ENCODE measurements at regions of chr3 and their contacts with region 1.

Region 1: DNA sequence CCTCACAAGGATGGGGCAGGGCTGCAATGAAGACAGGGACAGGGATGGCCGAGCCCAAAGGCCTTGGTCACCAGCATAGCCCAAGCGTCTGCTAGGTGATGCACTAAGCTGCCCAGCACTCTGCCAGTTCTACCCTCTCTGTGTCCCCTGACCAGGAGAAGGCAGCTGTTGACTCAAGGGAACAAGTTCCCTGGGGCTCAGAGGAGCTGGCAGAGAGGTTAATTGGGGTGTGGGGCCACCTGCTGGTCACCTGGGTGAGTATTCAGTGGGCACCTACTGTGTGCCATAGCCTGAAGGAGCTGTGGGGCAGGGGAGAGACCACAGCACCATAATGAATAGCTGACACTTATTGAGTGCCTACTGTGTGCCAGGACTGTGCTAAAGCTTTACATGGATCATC is 22.0 kb upstream of the DOCK3 start:
- DNase-seq: peak; percentile 32 to 51 (median 42)
- ATAC-seq: peak; percentile 78
- H3K4me3 ChIP-seq: no peak overlapping the region
- H3K27ac ChIP-seq: no peak overlapping the region
- H3K4me1 ChIP-seq: peaks cover 0 to 4% of the 10 kb centered on the region in 2 experiments; a peak in 2 of 5 replicates
- H3K27me3 ChIP-seq: peaks cover 0 to 4% of the 10 kb centered on the region in 2 experiments; a peak in 1 of 5 replicates
- CTCF ChIP-seq: peak; percentile 44 to 60 (median 52)
- EP300 ChIP-seq: no peak
- POLR2A ChIP-seq: no peak
- RAD21 ChIP-seq: peak; percentile 30 to 65

Region 2: DNA sequence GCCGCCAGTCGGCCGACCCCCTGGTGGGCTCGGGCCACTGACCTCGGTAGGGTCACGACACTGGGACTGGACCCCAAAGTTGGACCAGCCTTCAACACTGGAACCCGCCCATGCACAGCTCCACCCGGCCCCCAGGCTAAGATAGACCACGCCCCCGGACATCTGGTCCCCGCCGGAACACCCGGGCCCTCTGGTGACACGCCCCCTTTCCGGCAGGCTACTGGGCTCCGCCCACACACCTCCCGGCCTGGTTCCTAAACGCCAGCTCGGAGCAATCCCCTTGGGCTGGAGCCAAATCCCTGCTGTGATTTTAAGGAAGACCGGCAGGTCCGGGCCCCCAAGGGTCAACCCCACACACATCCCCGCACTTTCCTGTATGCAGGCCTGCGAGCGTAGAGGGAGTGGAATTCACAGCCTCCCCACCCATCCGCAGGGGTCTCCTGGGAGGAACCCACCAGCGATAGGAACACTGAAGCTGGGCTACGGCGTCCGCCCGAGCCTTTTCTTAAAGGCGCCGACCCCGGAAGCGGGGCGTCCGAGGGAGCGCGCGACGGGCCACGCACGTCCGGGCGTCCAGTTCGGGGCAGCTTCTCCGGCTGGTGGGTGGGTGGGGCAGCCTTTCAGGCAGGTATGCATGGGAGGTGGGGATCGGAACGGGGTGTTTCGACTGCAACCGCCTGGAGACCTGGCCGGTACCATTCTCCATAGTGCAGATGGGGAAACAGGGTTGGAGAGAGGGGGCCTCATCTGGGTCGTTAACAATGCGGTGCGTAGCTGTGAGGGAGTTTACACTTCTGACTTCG is 83.6 kb before region 1 on chr3 and contains the start of gene HEMK1:
- CTCF ChIA-PET with region 1: no interaction called
- POLR2A ChIA-PET with region 1: interaction called, 3 read pairs
- in situ Hi-C with region 1: loop called (anchors 5 kb)
- intact Hi-C with region 1: loop called (anchors 1 kb)
- DNase-seq: peak; percentile 95 to 98 (median 97)
- ATAC-seq: peak; percentile 90
- H3K4me3 ChIP-seq: peak within 1 kb of the TSS; percentile 90
- H3K27ac ChIP-seq: peak within 1 kb of the TSS; percentile 80
- H3K4me1 ChIP-seq: peaks cover 36 to 42% of the 10 kb centered on the region in 2 experiments; a peak in 4 of 5 replicates
- H3K27me3 ChIP-seq: no peaks in the 10 kb centered on the region
- CTCF ChIP-seq: no peak
- EP300 ChIP-seq: no peak
- POLR2A ChIP-seq: peak; percentile 57
- RAD21 ChIP-seq: no peak
- polyA plus RNA-seq, gene HEMK1: 2.0 to 5.2 TPM

Measured in K562 (cell line).